OCI-LY7 (cell line): ENCODE measurements at regions of chr12 and their contacts with region 1.

Region 1: GRCh38 chr12:132998741-132999140 is 12.6 kb downstream of the ZNF26 start:
- DNase-seq: peak; percentile 14
- H3K4me3 ChIP-seq: no peak overlapping the region
- H3K27ac ChIP-seq: no peak overlapping the region
- H3K4me1 ChIP-seq: no peaks in the 10 kb centered on the region
- CTCF ChIP-seq: no peak

Region 2: DNA sequence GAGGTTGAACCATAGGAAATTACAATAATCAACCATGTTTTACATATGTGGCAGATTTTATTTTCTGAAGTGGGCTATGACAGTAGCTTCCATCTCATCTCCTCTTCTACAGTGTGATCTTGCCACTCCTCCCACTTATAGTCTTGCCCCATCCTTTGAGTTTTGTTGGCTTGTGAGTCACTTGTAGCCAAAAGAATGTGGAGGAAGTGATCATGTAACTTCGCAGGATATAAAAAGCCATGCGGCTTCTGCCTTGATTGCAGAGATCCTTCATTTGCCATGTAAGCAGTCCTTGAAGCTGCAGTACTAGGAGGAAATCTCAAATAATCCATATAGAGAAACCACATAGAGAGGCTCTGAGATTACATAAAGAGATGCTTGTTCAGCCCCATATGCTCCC is 24.8 kb after region 1 on chr12:
- CTCF ChIA-PET with region 1: no interaction called
- POLR2A ChIA-PET with region 1: interaction called, 10 read pairs
- intact Hi-C with region 1: no loop called
- DNase-seq: no peak
- H3K4me3 ChIP-seq: no peak overlapping the region
- H3K27ac ChIP-seq: no peak overlapping the region
- H3K4me1 ChIP-seq: no peaks in the 10 kb centered on the region
- CTCF ChIP-seq: no peak

Region 3: DNA sequence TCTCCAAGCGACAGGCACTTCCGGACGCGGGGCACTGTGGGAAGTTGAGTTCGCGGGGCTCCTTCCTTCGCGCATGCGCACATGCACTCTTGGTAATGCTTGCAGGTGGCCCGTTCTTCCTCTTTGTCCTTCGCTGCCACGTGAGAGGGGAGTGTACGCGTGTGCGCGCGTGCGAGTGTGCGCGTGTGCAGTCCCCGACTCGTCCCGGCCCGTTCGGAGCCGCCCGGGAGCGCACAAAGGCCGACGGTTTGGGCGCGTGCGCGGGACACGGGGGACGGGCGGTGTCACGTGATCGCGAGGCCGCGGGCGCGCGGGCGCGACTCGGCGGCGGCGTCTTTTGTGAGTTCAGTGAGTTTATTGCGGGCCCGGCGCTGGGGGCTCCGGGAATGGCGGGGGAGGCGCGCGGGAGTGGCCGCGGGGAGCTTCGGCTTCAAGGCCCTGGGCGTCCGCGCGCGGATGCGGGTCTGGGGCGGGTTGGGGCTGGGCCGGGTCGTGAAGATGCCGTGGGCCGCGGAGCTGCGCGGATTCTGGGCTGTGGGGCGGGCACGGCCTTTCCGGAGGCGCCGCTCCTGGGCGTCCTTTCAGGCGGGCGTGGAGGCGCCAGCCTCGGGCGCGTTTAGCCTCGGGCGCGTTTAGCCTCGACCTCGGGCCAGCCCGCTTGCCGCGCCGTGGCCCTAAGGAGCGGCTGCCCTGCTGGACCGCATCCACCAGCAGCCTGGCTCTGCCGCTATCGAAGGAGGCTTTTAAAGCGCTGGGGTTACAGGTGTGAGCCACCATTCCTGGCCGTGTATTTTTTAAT is 38.7 kb after region 1 on chr12 and contains the start of gene ZNF84:
- CTCF ChIA-PET with region 1: no interaction called
- POLR2A ChIA-PET with region 1: no interaction called
- intact Hi-C with region 1: no loop called
- DNase-seq: peak; percentile 98
- H3K4me3 ChIP-seq: peak within 1 kb of the TSS; percentile 86
- H3K27ac ChIP-seq: peak within 1 kb of the TSS; percentile 81
- H3K4me1 ChIP-seq: peaks cover 8% of the 10 kb centered on the region
- CTCF ChIP-seq: no peak
- total RNA-seq, gene ZNF84: 22.1 and 26.9 TPM in 2 replicates

Region 4: GRCh38 chr12:133080368-133081158 is 81.8 kb after region 1 on chr12 and contains the start of gene ZNF140:
- CTCF ChIA-PET with region 1: no interaction called
- POLR2A ChIA-PET with region 1: no interaction called
- intact Hi-C with region 1: no loop called
- DNase-seq: peak; percentile 98
- H3K4me3 ChIP-seq: peak within 1 kb of the TSS; percentile 86
- H3K27ac ChIP-seq: peak within 1 kb of the TSS; percentile 87
- H3K4me1 ChIP-seq: peaks cover 15% of the 10 kb centered on the region
- CTCF ChIP-seq: 0 out of 2 replicates have a peak, but pooled peaks have one; percentile 35
- total RNA-seq, gene ZNF140: 13.4 and 16.3 TPM in 2 replicates